H1 (cell line): ENCODE measurements at regions of chr20 and their contacts with region 1.

Region 1: GRCh38 chr20:45436732-45437391 is 20.9 kb downstream of the PIGT start:
- DNase-seq: peak in 1 of 2 experiments; percentile 97
- H3K4me3 ChIP-seq: peak overlapping the region; percentile 17 to 72 (median 61); a peak in 7 of 8 replicates
- H3K27ac ChIP-seq: no peak overlapping the region
- H3K4me1 ChIP-seq: no peaks in the 10 kb centered on the region
- H3K27me3 ChIP-seq: no peaks in the 10 kb centered on the region
- CTCF ChIP-seq: peak; percentile 93 to 97 (median 95)
- EP300 ChIP-seq: no peak
- POLR2A ChIP-seq: no peak
- RAD21 ChIP-seq: peak; percentile 91 to 95

Region 2: GRCh38 chr20:45157962-45158361 is 278.9 kb before region 1 on chr20:
- CTCF ChIA-PET with region 1: no interaction called
- POLR2A ChIA-PET with region 1: no interaction called
- DNase-seq: no peak
- H3K4me3 ChIP-seq: no peak overlapping the region
- H3K27ac ChIP-seq: no peak overlapping the region
- H3K4me1 ChIP-seq: no peaks in the 10 kb centered on the region
- H3K27me3 ChIP-seq: peaks cover 0 to 1% (median 0%) of the 10 kb centered on the region in 4 experiments; a peak in 1 of 7 replicates
- CTCF ChIP-seq: no peak
- EP300 ChIP-seq: no peak
- POLR2A ChIP-seq: no peak
- RAD21 ChIP-seq: no peak

Region 3: GRCh38 chr20:45311589-45312211 is 125.2 kb before region 1 on chr20:
- CTCF ChIA-PET with region 1: interaction called, 129 read pairs
- POLR2A ChIA-PET with region 1: interaction called, 3 read pairs
- DNase-seq: peak in 1 of 2 experiments; percentile 93
- H3K4me3 ChIP-seq: peak overlapping the region; percentile 24 to 55 (median 48); a peak in 7 of 8 replicates
- H3K27ac ChIP-seq: no peak overlapping the region
- H3K4me1 ChIP-seq: peaks cover 0 to 11% (median 7%) of the 10 kb centered on the region in 4 experiments; a peak in 5 of 7 replicates
- H3K27me3 ChIP-seq: peaks cover 0 to 15% (median 5%) of the 10 kb centered on the region in 4 experiments; a peak in 5 of 7 replicates
- CTCF ChIP-seq: peak; percentile 87 to 96 (median 95)
- EP300 ChIP-seq: no peak
- POLR2A ChIP-seq: no peak
- RAD21 ChIP-seq: peak; percentile 69 to 73

Region 4: GRCh38 chr20:45362804-45363610 is 73.9 kb before region 1 on chr20 and contains the start of gene SYS1:
- CTCF ChIA-PET with region 1: interaction called, 186 read pairs
- POLR2A ChIA-PET with region 1: interaction called, 8 read pairs
- DNase-seq: peak; percentile 97 to 99
- H3K4me3 ChIP-seq: peak within 1 kb of the TSS; percentile 54 to 98 (median 80)
- H3K27ac ChIP-seq: peak within 1 kb of the TSS; percentile 72
- H3K4me1 ChIP-seq: peaks cover 3 to 12% (median 6%) of the 10 kb centered on the region in 4 experiments; a peak in 6 of 7 replicates
- H3K27me3 ChIP-seq: no peaks in the 10 kb centered on the region
- CTCF ChIP-seq: peak; percentile 70 to 91 (median 83)
- EP300 ChIP-seq: peak in 1 of 2 experiments; percentile 52; a peak in 1 of 3 replicates
- POLR2A ChIP-seq: peak in 1 of 2 experiments; percentile 81; a peak in 2 of 3 replicates
- RAD21 ChIP-seq: peak; percentile 82 to 83
- total RNA-seq, gene SYS1: 18.2 and 19.6 TPM in 2 replicates

Region 5: DNA sequence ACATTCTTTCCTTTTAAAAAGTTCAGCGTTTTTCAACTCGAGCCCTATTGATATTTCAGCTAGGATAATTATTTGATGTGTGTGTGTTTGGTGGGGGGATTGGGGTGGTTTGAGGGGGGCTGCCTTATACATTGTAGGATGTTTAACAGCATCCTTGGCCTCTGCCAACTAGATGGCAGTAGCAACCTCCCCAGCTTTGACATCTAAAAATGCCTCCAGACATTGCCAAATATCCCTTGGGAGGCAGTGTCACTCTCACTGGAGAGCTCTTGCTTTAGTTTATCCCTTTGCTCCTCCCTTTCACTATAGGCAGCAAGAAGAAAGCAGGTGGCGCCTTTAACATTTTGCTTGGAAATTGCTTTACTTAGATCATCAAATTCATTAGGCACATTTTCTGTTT is 44.1 kb before region 1 on chr20:
- CTCF ChIA-PET with region 1: interaction called, 13 read pairs
- POLR2A ChIA-PET with region 1: interaction called, 3 read pairs
- DNase-seq: no peak
- H3K4me3 ChIP-seq: no peak overlapping the region
- H3K27ac ChIP-seq: no peak overlapping the region
- H3K4me1 ChIP-seq: no peaks in the 10 kb centered on the region
- H3K27me3 ChIP-seq: no peaks in the 10 kb centered on the region
- CTCF ChIP-seq: peak in 2 of 3 experiments; percentile 25 to 28; a peak in 2 of 4 replicates
- EP300 ChIP-seq: no peak
- POLR2A ChIP-seq: no peak
- RAD21 ChIP-seq: peak; percentile 28 to 44; a peak in 3 of 4 replicates

Region 6: GRCh38 chr20:45415774-45416637 is 20.9 kb before region 1 on chr20 and contains the start of gene PIGT:
- CTCF ChIA-PET with region 1: interaction called, 54 read pairs
- POLR2A ChIA-PET with region 1: no interaction called
- DNase-seq: peak; percentile 54 to 84
- H3K4me3 ChIP-seq: peak within 1 kb of the TSS; percentile 74 to 89 (median 82)
- H3K27ac ChIP-seq: peak within 1 kb of the TSS; percentile 49
- H3K4me1 ChIP-seq: peaks cover 0 to 5% (median 2%) of the 10 kb centered on the region in 4 experiments; a peak in 3 of 7 replicates
- H3K27me3 ChIP-seq: no peaks in the 10 kb centered on the region
- CTCF ChIP-seq: no peak
- EP300 ChIP-seq: no peak
- POLR2A ChIP-seq: peak; percentile 80 to 87
- RAD21 ChIP-seq: peak; percentile 2 to 13; a peak in 1 of 4 replicates
- total RNA-seq, gene PIGT: 64.3 and 66.0 TPM in 2 replicates

Region 7: GRCh38 chr20:45470262-45470931 is 33.5 kb after region 1 on chr20:
- CTCF ChIA-PET with region 1: interaction called, 30 read pairs
- POLR2A ChIA-PET with region 1: no interaction called
- DNase-seq: peak in 1 of 2 experiments; percentile 87
- H3K4me3 ChIP-seq: peak overlapping the region; percentile 63 to 77 (median 70)
- H3K27ac ChIP-seq: peak overlapping the region; percentile 36; the same call in 1 of the 2 replicates
- H3K4me1 ChIP-seq: peaks cover 2 to 20% (median 7%) of the 10 kb centered on the region in 4 experiments
- H3K27me3 ChIP-seq: peaks cover 0 to 4% (median 1%) of the 10 kb centered on the region in 4 experiments; a peak in 3 of 7 replicates
- CTCF ChIP-seq: no peak
- EP300 ChIP-seq: no peak
- POLR2A ChIP-seq: peak in 1 of 2 experiments; percentile 67; a peak in 1 of 3 replicates
- RAD21 ChIP-seq: no peak

Region 8: GRCh38 chr20:45545754-45546453 is 109.0 kb after region 1 on chr20:
- CTCF ChIA-PET with region 1: no interaction called
- POLR2A ChIA-PET with region 1: no interaction called
- DNase-seq: peak in 1 of 2 experiments; percentile 47
- H3K4me3 ChIP-seq: no peak overlapping the region
- H3K27ac ChIP-seq: no peak overlapping the region
- H3K4me1 ChIP-seq: peaks cover 0 to 5% (median 0%) of the 10 kb centered on the region in 4 experiments; a peak in 1 of 7 replicates
- H3K27me3 ChIP-seq: no peaks in the 10 kb centered on the region
- CTCF ChIP-seq: peak in 2 of 3 experiments; percentile 62 to 63; a peak in 3 of 4 replicates
- EP300 ChIP-seq: no peak
- POLR2A ChIP-seq: no peak
- RAD21 ChIP-seq: peak; percentile 90 to 93